Gastrocnemius medialis (tissue), 4 donors: ENCODE measurements at regions of chr9 and their contacts with region 1.

Region 1: GRCh38 chr9:91433180-91433579 is 9.5 kb upstream of the NFIL3 start:
- DNase-seq: peak in 1 of 2 donors; percentile 31
- ATAC-seq: peak; percentile 98 to 100
- H3K4me3 ChIP-seq: no peak overlapping the region
- H3K27ac ChIP-seq: peak overlapping the region in 2 of 4 donors; percentile 28 to 48
- H3K4me1 ChIP-seq: no peaks in the 10 kb centered on the region
- H3K27me3 ChIP-seq: no peaks in the 10 kb centered on the region
- CTCF ChIP-seq: peak in 4 of 5 experiments; percentile 22 to 51 (median 30)
- POLR2A ChIP-seq: no peak

Region 2: GRCh38 chr9:91285729-91286353 is 147.3 kb before region 1 on chr9:
- in situ Hi-C with region 1: no loop called
- intact Hi-C with region 1: no loop called
- DNase-seq: no peak
- ATAC-seq: peak in 1 of 2 donors; percentile 36
- H3K4me3 ChIP-seq: no peak overlapping the region
- H3K27ac ChIP-seq: peak overlapping the region in 1 of 4 donors; percentile 33
- H3K4me1 ChIP-seq: peaks cover 3 to 17% of the 10 kb centered on the region in 2 donors
- H3K27me3 ChIP-seq: no peaks in the 10 kb centered on the region
- CTCF ChIP-seq: no peak
- POLR2A ChIP-seq: no peak

Region 3: DNA sequence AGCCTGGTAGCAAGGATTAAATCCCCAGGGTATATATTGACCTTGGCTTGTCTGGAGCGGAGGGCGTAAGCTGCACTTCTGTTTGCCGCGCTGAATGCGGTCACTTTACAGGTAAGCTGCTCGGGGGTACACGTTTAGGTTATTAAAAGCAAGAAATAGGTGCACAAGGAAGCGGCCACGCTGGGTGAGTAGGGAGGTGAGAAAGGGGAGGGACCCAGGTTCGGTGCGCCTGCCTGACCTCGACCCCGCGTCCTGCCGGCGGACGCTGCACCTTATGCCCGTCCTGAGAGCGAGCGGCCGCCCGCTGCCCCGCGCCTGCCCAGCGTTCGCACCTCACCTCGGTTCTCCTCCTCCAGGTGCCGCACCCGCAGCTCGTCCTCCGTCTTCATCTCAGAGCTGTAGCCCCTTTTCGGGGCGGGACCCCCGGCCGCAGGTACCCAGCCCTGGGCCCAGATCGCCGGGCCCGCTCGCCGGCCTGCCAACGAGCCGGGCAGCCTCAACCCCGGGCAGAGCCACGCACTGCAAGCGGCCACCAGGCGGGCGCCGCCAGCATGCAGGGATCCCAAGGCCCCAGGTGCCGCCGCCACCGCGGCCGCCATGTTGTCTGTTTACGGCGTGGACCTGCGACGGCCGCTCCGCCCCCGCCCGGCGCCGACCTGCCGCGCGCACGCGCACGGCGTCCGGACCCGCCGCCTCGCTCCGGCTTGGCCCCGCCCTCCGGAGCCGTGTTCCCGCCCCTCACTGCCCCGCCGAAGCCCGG is 71.7 kb before region 1 on chr9 and contains the start of gene AUH:
- in situ Hi-C with region 1: loop called in 1 of 4 experiments (anchors 10 kb)
- intact Hi-C with region 1: no loop called
- DNase-seq: peak; percentile 69 to 81
- ATAC-seq: peak; percentile 93 to 94
- H3K4me3 ChIP-seq: peak within 1 kb of the TSS; percentile 76 to 97 (median 94)
- H3K27ac ChIP-seq: peak within 1 kb of the TSS; percentile 90 to 96 (median 93)
- H3K4me1 ChIP-seq: peaks cover 29 to 43% of the 10 kb centered on the region in 2 donors
- H3K27me3 ChIP-seq: no peaks in the 10 kb centered on the region
- CTCF ChIP-seq: peak in 1 of 5 experiments; percentile 29
- POLR2A ChIP-seq: peak; percentile 61 to 89
- total RNA-seq, gene AUH: 17.1 to 28.2 (median 20.8) TPM

Region 4: DNA sequence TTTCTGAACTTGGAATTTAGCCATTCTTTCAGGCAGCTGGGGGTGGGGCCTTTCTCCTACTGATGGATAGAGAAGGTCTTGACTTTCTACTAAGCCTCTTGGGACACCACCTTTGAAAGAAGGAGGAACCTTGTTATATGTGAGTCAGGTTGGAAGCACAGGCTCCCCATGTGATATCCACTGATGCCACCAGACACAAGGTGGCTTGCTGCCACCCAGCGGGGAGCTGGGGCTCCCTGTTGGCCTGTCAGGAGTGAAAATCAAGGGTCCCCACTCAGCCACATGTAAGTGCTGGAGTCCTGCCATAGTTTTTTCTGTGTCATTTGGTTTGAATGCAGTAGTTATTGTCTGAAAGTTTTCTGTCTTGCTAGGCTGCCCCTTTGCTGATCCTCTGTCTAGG is 242.9 kb after region 1 on chr9:
- in situ Hi-C with region 1: no loop called
- intact Hi-C with region 1: loop called (anchors 10 kb)
- DNase-seq: no peak
- ATAC-seq: no peak
- H3K4me3 ChIP-seq: no peak overlapping the region
- H3K27ac ChIP-seq: no peak overlapping the region
- H3K4me1 ChIP-seq: no peaks in the 10 kb centered on the region
- H3K27me3 ChIP-seq: no peaks in the 10 kb centered on the region
- CTCF ChIP-seq: no peak
- POLR2A ChIP-seq: no peak